KBM-7 (cell line): ENCODE measurements at regions of chr6 and their contacts with region 1.

Region 1: DNA sequence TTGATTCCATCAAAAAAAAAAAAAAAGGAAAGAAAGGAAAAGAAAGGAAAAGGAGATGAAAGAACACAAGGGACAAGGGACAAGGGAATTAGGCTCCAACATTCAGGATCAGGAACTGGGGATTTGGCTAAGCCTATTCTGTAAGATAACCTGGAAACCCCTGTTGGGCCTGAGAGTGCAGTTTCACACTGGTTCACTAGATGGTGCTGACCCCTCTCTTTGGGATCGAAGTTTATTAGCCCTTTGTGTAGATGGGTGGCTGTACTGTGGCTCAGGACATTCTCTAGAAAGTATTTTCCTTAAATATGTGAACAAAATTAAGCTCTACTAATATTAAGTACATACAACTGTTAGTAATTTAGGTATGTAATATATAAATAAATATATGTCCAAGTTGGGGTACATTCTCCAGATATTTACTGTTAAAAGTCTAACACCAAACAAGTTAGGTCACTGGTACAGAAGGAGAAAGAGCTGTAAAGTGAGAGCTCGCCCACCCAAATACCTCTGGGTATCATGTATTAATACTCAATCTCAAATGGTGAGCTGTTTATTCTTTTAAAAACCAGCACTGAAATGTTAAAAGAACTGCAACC is 6.3 kb downstream of the OR2A4 start:
- DNase-seq: peak; percentile 54

Region 2: DNA sequence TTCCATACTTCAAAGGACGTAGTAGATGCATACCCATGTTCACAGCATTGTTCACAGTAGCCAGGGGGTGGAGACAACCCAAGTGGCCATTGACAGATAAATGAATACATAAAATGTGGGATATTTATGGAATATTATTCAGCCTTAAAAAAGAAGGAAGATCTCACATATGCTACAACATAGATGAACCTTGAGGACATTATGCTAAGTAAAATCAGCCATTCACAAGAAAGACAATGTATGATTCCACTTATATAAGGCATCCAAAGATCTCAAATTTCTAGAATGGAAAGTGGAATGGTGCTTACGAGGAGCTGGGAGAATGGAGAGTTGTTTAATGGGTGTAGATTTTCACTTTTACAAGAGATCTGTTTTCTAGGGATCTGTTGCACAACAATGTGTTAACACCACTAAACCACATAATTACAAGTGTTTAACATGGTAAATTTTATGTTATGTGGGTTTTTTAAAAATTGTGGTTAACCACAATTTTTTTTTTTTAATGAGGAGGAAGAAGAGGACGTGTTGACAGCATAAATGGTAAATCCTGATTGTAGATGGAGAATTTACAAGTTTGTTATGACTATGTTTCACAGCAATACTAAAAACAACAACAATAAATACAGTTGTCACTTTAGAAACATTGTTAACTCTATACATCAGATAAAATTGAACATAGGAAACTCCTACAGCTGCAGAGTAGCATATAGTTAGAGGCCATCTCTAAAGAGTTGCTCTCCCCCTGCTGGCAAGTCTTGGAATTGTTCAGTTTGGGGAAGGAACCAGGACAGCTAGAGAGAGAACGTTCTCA is 214.7 kb after region 1 on chr6:
- in situ Hi-C with region 1: loop called (anchors 25 kb)
- DNase-seq: peak; percentile 68